ENCODE measurements at regions of chr11 and their contacts with region 1.

Region 1: GRCh38 chr11:8533332-8533731 is 60.7 kb downstream of the STK33 start:
- DNase-seq: no peak
- ATAC-seq: peak; percentile 84
- H3K4me3 Mint-ChIP-seq: peak overlapping the region; percentile 76
- H3K27ac Mint-ChIP-seq: peak overlapping the region; percentile 90
- H3K4me1 Mint-ChIP-seq: peaks cover 52% of the 10 kb centered on the region
- H3K27me3 Mint-ChIP-seq: no peaks in the 10 kb centered on the region
- CTCF ChIP-seq: no peak

Region 2: GRCh38 chr11:8408151-8408941 is 125.0 kb before region 1 on chr11:
- CTCF ChIA-PET with region 1: no interaction called
- POLR2A ChIA-PET with region 1: no interaction called
- intact Hi-C with region 1: no loop called
- DNase-seq: no peak
- ATAC-seq: no peak
- H3K4me3 Mint-ChIP-seq: no peak overlapping the region
- H3K27ac Mint-ChIP-seq: no peak overlapping the region
- H3K4me1 Mint-ChIP-seq: no peaks in the 10 kb centered on the region
- H3K27me3 Mint-ChIP-seq: no peaks in the 10 kb centered on the region
- CTCF ChIP-seq: no peak

Region 3: DNA sequence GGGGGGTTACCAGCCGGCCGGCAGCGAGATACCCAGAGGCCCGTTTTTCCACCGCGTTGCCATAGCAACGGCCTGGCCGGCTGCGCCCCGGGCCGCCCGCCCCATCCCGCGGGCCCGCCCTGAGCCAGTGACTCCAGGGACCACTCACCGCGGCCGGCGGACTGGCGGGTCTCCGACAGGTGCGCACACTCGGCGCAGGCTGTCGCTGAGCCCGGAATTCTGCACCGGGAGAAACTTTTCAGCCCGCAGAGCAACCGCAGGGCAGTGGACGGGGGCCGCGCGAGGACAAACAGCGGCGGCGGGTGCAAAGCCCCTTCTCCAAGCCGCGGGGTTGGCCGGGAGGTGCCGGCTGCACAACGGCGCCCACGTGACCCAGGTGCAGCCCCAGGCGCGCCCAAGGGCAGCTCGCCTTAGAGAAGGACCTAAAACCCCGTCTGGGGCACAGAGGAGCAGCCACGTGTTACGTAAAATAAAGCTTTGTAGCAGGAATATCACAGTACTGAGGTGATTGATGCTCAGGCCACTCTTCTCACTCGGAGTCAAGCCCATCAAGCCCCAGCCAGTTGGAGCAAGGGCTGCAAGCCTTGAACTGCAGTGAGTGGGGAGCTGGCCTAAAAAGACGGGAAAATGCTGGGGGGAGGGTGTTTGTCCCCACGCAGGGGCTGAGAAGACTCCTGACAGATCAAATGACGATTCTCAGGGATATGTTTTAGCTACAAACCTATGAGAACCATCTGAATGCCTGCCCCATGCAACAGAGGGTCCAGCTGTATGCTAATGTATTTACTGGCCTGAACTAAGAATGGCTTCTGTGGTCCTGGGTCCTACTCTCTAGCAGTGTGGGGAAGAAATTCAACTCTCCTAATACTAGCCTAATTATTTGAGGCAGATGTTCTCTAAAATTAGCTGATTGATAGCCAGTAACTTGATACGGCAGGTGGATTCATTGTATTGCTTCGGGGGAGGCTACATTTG is 60.9 kb after region 1 on chr11 and contains the start of gene STK33:
- CTCF ChIA-PET with region 1: no interaction called
- POLR2A ChIA-PET with region 1: interaction called, 10 read pairs
- intact Hi-C with region 1: no loop called
- DNase-seq: peak; percentile 52
- ATAC-seq: peak; percentile 92
- H3K4me3 Mint-ChIP-seq: peak within 1 kb of the TSS; percentile 88
- H3K27ac Mint-ChIP-seq: peak within 1 kb of the TSS; percentile 50
- H3K4me1 Mint-ChIP-seq: peaks cover 17% of the 10 kb centered on the region
- H3K27me3 Mint-ChIP-seq: peaks cover 11% of the 10 kb centered on the region
- CTCF ChIP-seq: no peak
- total RNA-seq, gene STK33: 11.4 and 14.0 TPM in 2 replicates

Region 4: DNA sequence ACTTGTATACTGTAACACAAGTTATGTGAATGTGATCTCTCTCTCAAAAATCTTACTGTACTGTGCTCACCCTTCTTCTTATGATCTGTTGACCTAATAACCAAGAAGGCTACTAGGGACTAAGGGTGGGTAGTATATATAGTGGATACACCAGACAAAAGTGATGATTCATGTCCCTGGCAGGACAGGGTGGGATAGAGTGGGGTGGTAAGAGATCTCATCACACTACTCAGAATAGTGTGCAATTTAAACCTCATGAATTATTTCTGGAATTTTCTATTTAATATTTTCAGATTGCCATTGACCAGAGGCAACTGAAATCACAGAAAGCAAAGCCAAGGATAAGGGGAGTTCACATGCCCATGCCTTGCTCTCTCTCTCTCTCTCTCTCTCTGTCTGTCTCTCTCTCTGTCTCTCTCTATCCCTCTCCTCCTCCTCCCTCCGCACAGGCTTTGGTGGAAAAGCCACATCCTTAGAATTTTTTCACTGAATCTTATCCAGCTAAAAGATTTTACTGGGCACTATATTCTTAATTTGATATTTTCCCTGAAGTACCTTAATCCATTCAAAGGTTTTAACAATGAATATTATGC is 72.7 kb after region 1 on chr11:
- CTCF ChIA-PET with region 1: no interaction called
- POLR2A ChIA-PET with region 1: no interaction called
- intact Hi-C with region 1: no loop called
- DNase-seq: no peak
- ATAC-seq: no peak
- H3K4me3 Mint-ChIP-seq: no peak overlapping the region
- H3K27ac Mint-ChIP-seq: no peak overlapping the region
- H3K4me1 Mint-ChIP-seq: no peaks in the 10 kb centered on the region
- H3K27me3 Mint-ChIP-seq: peaks cover 23% of the 10 kb centered on the region
- CTCF ChIP-seq: no peak

Measured in activated B cell treated with CpG ODN at 0.5 μM for 24 hours (primary cell).